Caco-2 (cell line): ENCODE measurements at regions of chr12 and their contacts with region 1.

Region 1: GRCh38 chr12:60257063-60257462 is 661.2 kb downstream of the SLC16A7 start:
- DNase-seq: peak; percentile 35 to 38
- H3K4me3 ChIP-seq: no peak overlapping the region
- H3K4me3 Mint-ChIP-seq: no peak overlapping the region
- H3K27ac Mint-ChIP-seq: no peak overlapping the region
- H3K4me1 ChIP-seq: no peaks in the 10 kb centered on the region
- H3K4me1 Mint-ChIP-seq: peaks cover 6% of the 10 kb centered on the region
- H3K27me3 ChIP-seq: no peaks in the 10 kb centered on the region
- H3K27me3 Mint-ChIP-seq: no peaks in the 10 kb centered on the region
- CTCF ChIP-seq: peak in 1 of 2 experiments; percentile 22

Region 2: DNA sequence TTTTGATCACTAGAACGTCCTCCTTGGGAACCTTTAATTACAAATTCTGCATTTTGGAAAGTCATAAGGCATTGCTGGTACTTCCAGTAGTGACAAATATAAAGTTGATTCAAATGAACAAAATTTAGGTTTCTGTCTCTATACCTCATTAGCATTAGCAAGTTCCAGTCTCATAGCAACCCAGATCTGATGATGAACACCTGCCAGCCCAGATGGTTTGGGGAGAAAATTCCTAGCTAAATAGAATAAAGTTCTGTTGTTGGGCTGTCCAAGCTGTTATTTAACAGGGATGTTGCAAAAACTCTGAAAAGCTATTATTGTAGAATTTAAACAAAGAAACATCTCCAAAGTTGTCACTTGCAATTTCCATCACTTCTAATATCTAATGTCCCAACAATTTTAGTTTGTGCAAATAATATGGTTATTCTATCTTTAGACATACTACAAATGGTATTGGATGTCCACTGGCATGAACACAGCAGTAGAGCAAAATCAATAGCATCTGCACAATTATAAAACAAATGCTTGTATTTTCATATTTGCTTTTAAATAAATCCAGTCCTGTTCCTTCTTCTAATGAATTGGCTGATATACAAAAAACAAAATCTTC is 361.8 kb before region 1 on chr12:
- CTCF ChIA-PET with region 1: no interaction called
- POLR2A ChIA-PET with region 1: no interaction called
- intact Hi-C with region 1: no loop called
- DNase-seq: no peak
- H3K4me3 ChIP-seq: no peak overlapping the region
- H3K4me3 Mint-ChIP-seq: no peak overlapping the region
- H3K27ac Mint-ChIP-seq: no peak overlapping the region
- H3K4me1 ChIP-seq: no peaks in the 10 kb centered on the region
- H3K4me1 Mint-ChIP-seq: no peaks in the 10 kb centered on the region
- H3K27me3 ChIP-seq: no peaks in the 10 kb centered on the region
- H3K27me3 Mint-ChIP-seq: no peaks in the 10 kb centered on the region
- CTCF ChIP-seq: no peak

Region 3: DNA sequence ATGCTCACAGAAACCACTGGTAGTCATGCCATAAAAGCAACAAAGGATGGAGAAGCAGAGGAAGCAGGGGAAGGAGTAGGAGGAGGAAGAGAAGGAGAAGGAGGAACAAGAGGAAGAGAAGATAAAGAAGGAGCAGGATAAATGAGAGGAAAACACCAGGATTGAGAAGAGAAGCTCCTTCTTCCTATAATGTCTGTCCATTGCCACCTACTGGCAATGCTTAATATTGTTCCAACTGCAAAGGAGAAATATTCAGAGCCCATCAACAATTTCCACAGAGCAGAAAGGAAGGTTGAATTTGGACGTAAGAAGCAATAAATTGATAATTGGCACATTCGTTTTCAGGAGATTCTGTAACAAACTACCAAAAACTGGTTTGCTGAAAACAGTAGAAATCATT is 237.2 kb after region 1 on chr12:
- CTCF ChIA-PET with region 1: interaction called, 29 read pairs
- POLR2A ChIA-PET with region 1: no interaction called
- intact Hi-C with region 1: loop called (anchors 1 kb)
- DNase-seq: peak in 1 of 2 experiments; percentile 33
- H3K4me3 ChIP-seq: no peak overlapping the region
- H3K4me3 Mint-ChIP-seq: no peak overlapping the region
- H3K27ac Mint-ChIP-seq: no peak overlapping the region
- H3K4me1 ChIP-seq: no peaks in the 10 kb centered on the region
- H3K4me1 Mint-ChIP-seq: no peaks in the 10 kb centered on the region
- H3K27me3 ChIP-seq: no peaks in the 10 kb centered on the region
- H3K27me3 Mint-ChIP-seq: no peaks in the 10 kb centered on the region
- CTCF ChIP-seq: peak; percentile 41 to 65